Sciatic nerve (tissue), 2 donors: ENCODE measurements at regions of chr3 and their contacts with region 1.

Region 1: GRCh38 chr3:141686466-141687291 is 51.4 kb upstream of the RNF7 start:
- DNase-seq: peak; percentile 83
- ATAC-seq: peak; percentile 95

Region 2: GRCh38 chr3:140829796-140830195 is 856.9 kb before region 1 on chr3:
- intact Hi-C with region 1: loop called (anchors 5 kb)
- DNase-seq: no peak
- ATAC-seq: no peak

Region 3: GRCh38 chr3:141544697-141545096 is 142.0 kb before region 1 on chr3:
- intact Hi-C with region 1: no loop called
- DNase-seq: no peak
- ATAC-seq: no peak

Region 4: GRCh38 chr3:141632779-141633374 is 53.8 kb before region 1 on chr3:
- intact Hi-C with region 1: no loop called
- DNase-seq: no peak
- ATAC-seq: no peak

Region 5: DNA sequence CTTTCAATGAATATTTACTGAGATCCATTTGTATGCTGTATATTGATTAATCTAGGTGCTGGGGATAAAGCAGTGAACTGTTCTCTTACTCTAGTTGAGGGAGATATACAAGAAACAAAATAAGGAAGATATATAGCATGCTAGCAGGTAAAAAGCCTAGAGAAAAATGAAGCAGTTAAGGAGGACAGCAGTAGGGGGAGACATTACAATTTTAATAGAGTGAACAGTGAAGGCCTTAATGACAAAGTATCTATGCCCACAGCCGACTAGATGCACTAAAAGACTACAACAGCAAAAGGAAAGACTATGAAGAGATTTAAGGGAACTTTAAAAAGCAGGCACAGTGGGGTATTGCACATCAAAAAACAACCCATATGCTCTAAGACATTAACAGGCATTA is 679.8 kb after region 1 on chr3:
- intact Hi-C with region 1: no loop called
- DNase-seq: no peak
- ATAC-seq: no peak